ENCODE measurements at regions of chr5 and their contacts with region 1.

Region 1: DNA sequence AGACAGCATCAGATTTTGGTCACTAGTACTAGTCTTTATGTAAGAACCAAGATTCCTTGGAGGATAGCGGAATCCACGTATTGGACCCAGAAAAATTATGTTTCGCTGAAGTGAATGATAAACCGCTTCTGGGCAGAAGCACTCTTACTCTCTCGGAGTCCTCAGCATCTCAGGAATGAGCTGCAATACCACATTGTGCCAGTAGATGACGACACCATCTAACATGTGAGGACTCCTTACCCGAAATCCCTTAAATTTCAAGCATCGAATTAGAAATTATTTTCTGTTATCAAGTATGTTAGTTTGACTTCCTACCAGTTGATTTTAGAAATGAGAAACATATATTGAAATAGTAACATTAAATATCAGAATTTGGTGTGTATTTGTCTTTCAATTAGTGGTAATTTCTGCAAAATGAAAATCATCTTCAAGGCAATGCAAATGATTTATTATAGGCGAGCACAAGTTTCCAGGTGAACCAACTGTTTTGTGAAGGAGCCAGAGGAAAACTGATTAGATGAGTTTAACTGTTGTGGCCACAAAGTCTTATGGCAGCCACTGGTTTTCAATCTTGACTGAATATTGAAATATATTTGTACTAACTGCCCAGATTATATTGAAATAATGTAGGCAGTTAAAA is 66.0 kb upstream of the CAMK4 start:
- DNase-seq: peak; percentile 70
- ATAC-seq: peak; percentile 61
- H3K4me3 ChIP-seq: no peak overlapping the region
- H3K4me3 Mint-ChIP-seq: no peak overlapping the region
- H3K27ac ChIP-seq: no peak overlapping the region
- H3K27ac Mint-ChIP-seq: no peak overlapping the region
- H3K4me1 ChIP-seq: no peaks in the 10 kb centered on the region
- H3K4me1 Mint-ChIP-seq: no peaks in the 10 kb centered on the region
- H3K27me3 ChIP-seq: no peaks in the 10 kb centered on the region
- H3K27me3 Mint-ChIP-seq: peaks cover 33% of the 10 kb centered on the region
- CTCF ChIP-seq: peak; percentile 100

Region 2: DNA sequence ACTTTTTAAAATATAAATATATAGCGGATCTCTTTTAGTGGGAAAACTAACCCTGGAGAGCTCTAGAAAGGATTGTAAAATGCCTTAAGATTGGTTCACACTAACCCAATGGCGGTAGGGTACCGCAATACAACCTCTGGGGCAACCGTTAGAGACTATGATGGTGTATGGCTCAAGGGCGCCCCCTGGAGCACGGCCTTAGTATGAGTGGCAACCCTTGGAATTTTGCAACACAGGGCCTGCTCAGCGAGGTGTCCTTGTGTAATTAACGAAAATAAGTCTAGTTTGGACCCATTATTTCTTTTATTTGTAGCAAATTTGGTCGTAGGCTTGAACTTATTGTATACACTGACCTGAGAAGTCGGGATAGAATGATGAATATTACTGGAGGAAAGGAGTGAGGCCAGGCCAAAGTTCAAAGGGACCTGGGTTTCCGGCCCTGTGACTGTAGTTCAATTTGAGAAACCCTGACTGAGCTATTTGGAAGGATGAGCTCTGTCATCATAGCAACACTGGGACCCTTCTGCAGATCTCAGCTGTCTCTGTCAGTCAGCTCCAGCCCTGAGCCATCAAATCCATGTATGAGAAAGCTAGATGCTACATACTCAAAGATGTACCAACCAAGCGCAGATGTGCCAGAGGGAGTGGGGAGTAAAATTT is 120.8 kb after region 1 on chr5:
- CTCF ChIA-PET with region 1: interaction called, 37 read pairs
- POLR2A ChIA-PET with region 1: no interaction called
- intact Hi-C with region 1: no loop called
- DNase-seq: peak; percentile 47
- ATAC-seq: peak; percentile 68
- H3K4me3 ChIP-seq: no peak overlapping the region
- H3K4me3 Mint-ChIP-seq: no peak overlapping the region
- H3K27ac ChIP-seq: no peak overlapping the region
- H3K27ac Mint-ChIP-seq: no peak overlapping the region
- H3K4me1 ChIP-seq: no peaks in the 10 kb centered on the region
- H3K4me1 Mint-ChIP-seq: no peaks in the 10 kb centered on the region
- H3K27me3 ChIP-seq: no peaks in the 10 kb centered on the region
- H3K27me3 Mint-ChIP-seq: no peaks in the 10 kb centered on the region
- CTCF ChIP-seq: peak; percentile 68

Region 3: GRCh38 chr5:112146323-112147226 is 988.4 kb after region 1 on chr5:
- CTCF ChIA-PET with region 1: interaction called, 33 read pairs
- POLR2A ChIA-PET with region 1: no interaction called
- intact Hi-C with region 1: loop called (anchors 1 kb)
- DNase-seq: peak; percentile 77
- ATAC-seq: peak; percentile 90
- H3K4me3 ChIP-seq: no peak overlapping the region
- H3K4me3 Mint-ChIP-seq: no peak overlapping the region
- H3K27ac ChIP-seq: no peak overlapping the region
- H3K27ac Mint-ChIP-seq: no peak overlapping the region
- H3K4me1 ChIP-seq: no peaks in the 10 kb centered on the region
- H3K4me1 Mint-ChIP-seq: no peaks in the 10 kb centered on the region
- H3K27me3 ChIP-seq: peaks cover 0 to 5% (median 0%) of the 10 kb centered on the region in 4 experiments
- H3K27me3 Mint-ChIP-seq: peaks cover 16% of the 10 kb centered on the region
- CTCF ChIP-seq: peak; percentile 91

Measured in B cell (primary cell).